ENCODE measurements at regions of chr2 and their contacts with region 1.

Region 1: GRCh38 chr2:76050196-76050595 is 339.5 kb upstream of the GCFC2 start:
- DNase-seq: no peak
- ATAC-seq: no peak
- H3K4me3 ChIP-seq: no peak overlapping the region
- H3K27ac ChIP-seq: no peak overlapping the region
- H3K4me1 ChIP-seq: no peaks in the 10 kb centered on the region
- H3K27me3 ChIP-seq: no peaks in the 10 kb centered on the region
- CTCF ChIP-seq: no peak; the same call in 1 of the 2 replicates

Region 2: GRCh38 chr2:75982719-75983118 is 67.5 kb before region 1 on chr2:
- CTCF ChIA-PET with region 1: no interaction called
- POLR2A ChIA-PET with region 1: no interaction called
- intact Hi-C with region 1: no loop called
- DNase-seq: no peak
- ATAC-seq: no peak
- H3K4me3 ChIP-seq: no peak overlapping the region
- H3K27ac ChIP-seq: no peak overlapping the region
- H3K4me1 ChIP-seq: no peaks in the 10 kb centered on the region
- H3K27me3 ChIP-seq: peaks cover 23% of the 10 kb centered on the region
- CTCF ChIP-seq: no peak

Region 3: DNA sequence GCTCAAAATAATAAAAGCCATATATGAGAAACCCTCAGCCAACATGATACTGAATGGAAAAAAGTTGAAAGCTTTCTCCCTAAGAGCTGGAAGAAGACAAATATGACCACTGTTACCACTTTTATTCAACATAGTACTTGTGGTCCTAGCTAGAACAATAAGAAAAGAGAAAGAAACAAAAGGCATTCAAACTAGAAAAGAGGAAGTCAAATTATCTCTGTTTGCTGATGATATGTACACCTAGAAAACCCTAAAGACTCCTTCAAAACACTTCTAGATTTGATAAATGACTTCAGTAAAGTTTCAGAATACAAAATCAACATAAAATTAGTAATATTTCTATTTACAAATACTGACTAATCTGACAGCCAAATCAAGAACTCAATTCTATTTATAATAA is 10.7 kb before region 1 on chr2:
- CTCF ChIA-PET with region 1: interaction called, 15 read pairs
- POLR2A ChIA-PET with region 1: no interaction called
- intact Hi-C with region 1: no loop called
- DNase-seq: no peak
- ATAC-seq: no peak
- H3K4me3 ChIP-seq: no peak overlapping the region
- H3K27ac ChIP-seq: no peak overlapping the region
- H3K4me1 ChIP-seq: no peaks in the 10 kb centered on the region
- H3K27me3 ChIP-seq: no peaks in the 10 kb centered on the region
- CTCF ChIP-seq: no peak

Region 4: GRCh38 chr2:76083248-76083647 is 33.1 kb after region 1 on chr2:
- CTCF ChIA-PET with region 1: no interaction called
- POLR2A ChIA-PET with region 1: no interaction called
- intact Hi-C with region 1: no loop called
- DNase-seq: no peak
- ATAC-seq: no peak
- H3K4me3 ChIP-seq: no peak overlapping the region
- H3K27ac ChIP-seq: no peak overlapping the region
- H3K4me1 ChIP-seq: no peaks in the 10 kb centered on the region
- H3K27me3 ChIP-seq: no peaks in the 10 kb centered on the region
- CTCF ChIP-seq: no peak